Activated B cell treated with CpG ODN at 0.5 μM for 24 hours (primary cell): ENCODE measurements at regions of chrX and their contacts with region 1.

Region 1: GRCh38 chrX:55717521-55718497 is at the start of gene RRAGB:
- DNase-seq: peak; percentile 74
- ATAC-seq: peak; percentile 96
- H3K4me3 Mint-ChIP-seq: peak within 1 kb of the TSS; percentile 89
- H3K27ac Mint-ChIP-seq: peak within 1 kb of the TSS; percentile 93
- H3K4me1 Mint-ChIP-seq: peaks cover 28% of the 10 kb centered on the region
- H3K27me3 Mint-ChIP-seq: no peaks in the 10 kb centered on the region
- CTCF ChIP-seq: no peak
- total RNA-seq, gene RRAGB: 13.2 and 15.3 TPM in 2 replicates

Region 2: GRCh38 chrX:54639346-54640102 is 1078.3 kb before region 1 on chrX:
- CTCF ChIA-PET with region 1: no interaction called
- POLR2A ChIA-PET with region 1: interaction called, 10 read pairs
- intact Hi-C with region 1: no loop called
- DNase-seq: peak; percentile 76
- ATAC-seq: peak; percentile 88
- H3K4me3 Mint-ChIP-seq: peak overlapping the region; percentile 97
- H3K27ac Mint-ChIP-seq: peak overlapping the region; percentile 100
- H3K4me1 Mint-ChIP-seq: peaks cover 6% of the 10 kb centered on the region
- H3K27me3 Mint-ChIP-seq: no peaks in the 10 kb centered on the region
- CTCF ChIP-seq: no peak

Region 3: GRCh38 chrX:55057675-55058249 is 660.0 kb before region 1 on chrX:
- CTCF ChIA-PET with region 1: no interaction called
- POLR2A ChIA-PET with region 1: no interaction called
- intact Hi-C with region 1: loop called (anchors 5 kb)
- DNase-seq: no peak
- ATAC-seq: peak; percentile 54
- H3K4me3 Mint-ChIP-seq: peak overlapping the region; percentile 68
- H3K27ac Mint-ChIP-seq: no peak overlapping the region
- H3K4me1 Mint-ChIP-seq: peaks cover 11% of the 10 kb centered on the region
- H3K27me3 Mint-ChIP-seq: no peaks in the 10 kb centered on the region
- CTCF ChIP-seq: peak; percentile 18

Region 4: GRCh38 chrX:55342533-55343501 is 375.0 kb before region 1 on chrX:
- CTCF ChIA-PET with region 1: no interaction called
- POLR2A ChIA-PET with region 1: no interaction called
- intact Hi-C with region 1: loop called (anchors 5 kb)
- DNase-seq: no peak
- ATAC-seq: peak; percentile 68
- H3K4me3 Mint-ChIP-seq: no peak overlapping the region
- H3K27ac Mint-ChIP-seq: no peak overlapping the region
- H3K4me1 Mint-ChIP-seq: peaks cover 3% of the 10 kb centered on the region
- H3K27me3 Mint-ChIP-seq: peaks cover 4% of the 10 kb centered on the region
- CTCF ChIP-seq: no peak

Region 5: GRCh38 chrX:55579114-55579513 is 138.7 kb before region 1 on chrX:
- CTCF ChIA-PET with region 1: no interaction called
- POLR2A ChIA-PET with region 1: no interaction called
- intact Hi-C with region 1: no loop called
- DNase-seq: no peak
- ATAC-seq: no peak
- H3K4me3 Mint-ChIP-seq: no peak overlapping the region
- H3K27ac Mint-ChIP-seq: no peak overlapping the region
- H3K4me1 Mint-ChIP-seq: no peaks in the 10 kb centered on the region
- H3K27me3 Mint-ChIP-seq: no peaks in the 10 kb centered on the region
- CTCF ChIP-seq: no peak

Region 6: DNA sequence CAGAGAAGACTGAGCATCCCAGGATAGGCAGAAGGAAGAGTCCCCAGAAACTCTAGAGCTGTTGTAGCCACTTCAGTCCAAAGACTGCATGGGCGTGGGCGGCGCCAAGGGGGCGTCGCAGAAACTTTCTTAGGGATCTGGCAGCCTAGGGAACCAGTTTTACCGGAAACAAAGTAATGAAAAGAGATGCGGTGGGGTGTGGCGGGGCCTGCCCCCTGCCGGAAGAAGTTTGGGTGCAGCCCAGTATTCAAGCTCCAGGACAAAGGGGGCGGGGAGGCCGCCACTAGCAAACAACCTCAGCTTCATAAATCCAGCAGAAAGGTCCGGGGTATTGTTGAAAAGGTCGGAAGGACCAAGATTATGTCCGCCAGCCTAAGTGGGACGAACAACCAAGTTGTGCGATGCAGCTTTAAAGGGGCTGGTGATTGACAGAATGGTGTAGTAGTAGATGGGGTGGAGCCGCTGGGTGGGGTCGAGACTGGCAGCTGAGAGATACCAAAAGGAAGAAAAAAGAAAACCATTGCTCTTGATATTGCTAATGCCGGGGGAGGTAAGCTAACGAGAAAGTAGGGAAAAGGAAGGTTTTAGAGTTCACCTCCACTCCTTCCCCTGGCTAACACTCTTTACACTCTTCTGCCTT is 190.3 kb after region 1 on chrX:
- CTCF ChIA-PET with region 1: interaction called, 9 read pairs
- POLR2A ChIA-PET with region 1: interaction called, 6 read pairs
- intact Hi-C with region 1: loop called (anchors 1 kb)
- DNase-seq: peak; percentile 34
- ATAC-seq: peak; percentile 83
- H3K4me3 Mint-ChIP-seq: peak overlapping the region; percentile 93
- H3K27ac Mint-ChIP-seq: peak overlapping the region; percentile 94
- H3K4me1 Mint-ChIP-seq: peaks cover 38% of the 10 kb centered on the region
- H3K27me3 Mint-ChIP-seq: no peaks in the 10 kb centered on the region
- CTCF ChIP-seq: no peak

Region 7: DNA sequence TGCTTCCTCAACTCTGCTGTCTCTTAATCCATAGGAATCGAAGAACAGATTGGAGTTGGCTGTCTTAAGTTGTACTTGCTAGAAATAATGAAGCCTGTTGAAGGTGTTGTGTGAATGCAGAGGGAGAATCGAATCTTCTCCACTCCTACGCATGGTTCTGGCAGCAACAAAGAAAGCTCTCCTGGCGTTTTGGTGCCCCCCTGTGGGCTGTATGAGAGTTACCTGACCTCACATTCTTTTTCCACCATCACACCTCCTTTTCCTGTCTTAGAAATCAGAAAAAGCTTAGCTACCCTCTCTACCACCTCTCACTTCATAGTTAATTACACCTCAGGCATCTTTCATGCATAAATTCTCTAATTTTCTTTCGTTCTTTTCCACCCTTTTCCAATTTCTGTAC is 530.7 kb after region 1 on chrX:
- CTCF ChIA-PET with region 1: interaction called, 4 read pairs
- POLR2A ChIA-PET with region 1: no interaction called
- intact Hi-C with region 1: loop called (anchors 1 kb)
- DNase-seq: peak; percentile 16
- ATAC-seq: peak; percentile 70
- H3K4me3 Mint-ChIP-seq: no peak overlapping the region
- H3K27ac Mint-ChIP-seq: no peak overlapping the region
- H3K4me1 Mint-ChIP-seq: peaks cover 23% of the 10 kb centered on the region
- H3K27me3 Mint-ChIP-seq: no peaks in the 10 kb centered on the region
- CTCF ChIP-seq: no peak

Region 8: GRCh38 chrX:57595381-57595811 is 1877.6 kb after region 1 on chrX:
- CTCF ChIA-PET with region 1: no interaction called
- POLR2A ChIA-PET with region 1: no interaction called
- intact Hi-C with region 1: loop called (anchors 5 kb)
- DNase-seq: no peak
- ATAC-seq: no peak
- H3K4me3 Mint-ChIP-seq: peak overlapping the region; percentile 74
- H3K27ac Mint-ChIP-seq: peak overlapping the region; percentile 35
- H3K4me1 Mint-ChIP-seq: peaks cover 49% of the 10 kb centered on the region
- H3K27me3 Mint-ChIP-seq: no peaks in the 10 kb centered on the region
- CTCF ChIP-seq: no peak